CD8-positive, alpha-beta T cell (primary cell): ENCODE measurements at regions of chr4 and their contacts with region 1.

Region 1: DNA sequence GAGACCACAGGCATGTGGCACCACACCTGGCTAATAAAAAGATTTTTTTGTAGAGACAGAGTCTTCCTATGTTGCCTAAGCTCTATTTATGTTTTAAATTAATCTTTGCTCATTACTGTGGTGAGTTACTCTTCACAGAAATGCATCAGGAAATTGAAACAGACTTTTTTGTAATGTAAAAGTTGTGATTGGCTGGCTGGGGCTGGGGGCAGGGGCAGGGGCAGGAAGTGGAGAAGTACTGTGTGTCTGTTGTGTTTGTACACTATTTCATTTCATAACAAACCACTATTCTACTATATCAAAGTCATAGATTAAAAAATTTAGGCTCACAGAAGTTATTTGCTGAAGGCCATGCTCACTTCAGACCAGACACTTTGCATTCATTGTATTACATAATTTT is 19.1 kb upstream of the ABRAXAS1 start:
- DNase-seq: peak in 3 of 9 experiments; percentile 19 to 46 (median 30)
- ATAC-seq: peak; percentile 65
- H3K4me3 ChIP-seq: no peak overlapping the region
- H3K4me3 Mint-ChIP-seq: no peak overlapping the region
- H3K27ac ChIP-seq: peak overlapping the region in 1 of 2 experiments; percentile 21
- H3K27ac Mint-ChIP-seq: peak overlapping the region; percentile 72
- H3K4me1 ChIP-seq: peaks cover 13% of the 10 kb centered on the region
- H3K4me1 Mint-ChIP-seq: peaks cover 15% of the 10 kb centered on the region
- H3K27me3 ChIP-seq: no peaks in the 10 kb centered on the region
- H3K27me3 Mint-ChIP-seq: peaks cover 2% of the 10 kb centered on the region
- CTCF ChIP-seq: no peak

Region 2: DNA sequence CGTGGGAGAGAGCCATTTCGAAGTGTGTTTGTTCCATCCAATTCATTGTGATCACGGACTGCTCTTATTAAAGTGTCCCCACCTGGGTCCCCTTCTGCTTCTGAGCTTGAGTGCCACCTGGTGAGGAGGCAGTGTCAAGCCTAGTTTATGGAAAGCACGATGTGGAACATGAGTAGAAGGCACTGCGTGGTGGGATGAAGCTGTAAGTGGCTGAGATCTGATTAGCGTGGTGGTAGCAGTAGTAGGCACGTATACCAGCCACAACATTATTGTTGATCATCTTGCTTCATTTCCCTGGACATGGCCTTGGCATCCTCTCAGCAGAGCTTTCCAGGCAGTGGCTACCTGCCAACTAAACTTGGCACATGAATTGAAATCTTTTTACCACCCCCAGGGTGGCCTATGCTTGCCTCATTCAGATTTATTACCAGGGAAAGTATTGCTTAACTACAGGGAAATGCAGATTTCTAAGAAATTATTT is 78.4 kb after region 1 on chr4:
- CTCF ChIA-PET with region 1: interaction called, 3 read pairs
- POLR2A ChIA-PET with region 1: no interaction called
- intact Hi-C with region 1: loop called in 1 of 2 experiments (anchors 2 kb)
- DNase-seq: peak in 2 of 9 experiments; percentile 12 to 20
- ATAC-seq: no peak
- H3K4me3 ChIP-seq: no peak overlapping the region
- H3K4me3 Mint-ChIP-seq: no peak overlapping the region
- H3K27ac ChIP-seq: no peak overlapping the region
- H3K27ac Mint-ChIP-seq: no peak overlapping the region
- H3K4me1 ChIP-seq: no peaks in the 10 kb centered on the region
- H3K4me1 Mint-ChIP-seq: no peaks in the 10 kb centered on the region
- H3K27me3 ChIP-seq: no peaks in the 10 kb centered on the region
- H3K27me3 Mint-ChIP-seq: no peaks in the 10 kb centered on the region
- CTCF ChIP-seq: no peak